ENCODE measurements at regions of chr19 and their contacts with region 1.

Region 1: DNA sequence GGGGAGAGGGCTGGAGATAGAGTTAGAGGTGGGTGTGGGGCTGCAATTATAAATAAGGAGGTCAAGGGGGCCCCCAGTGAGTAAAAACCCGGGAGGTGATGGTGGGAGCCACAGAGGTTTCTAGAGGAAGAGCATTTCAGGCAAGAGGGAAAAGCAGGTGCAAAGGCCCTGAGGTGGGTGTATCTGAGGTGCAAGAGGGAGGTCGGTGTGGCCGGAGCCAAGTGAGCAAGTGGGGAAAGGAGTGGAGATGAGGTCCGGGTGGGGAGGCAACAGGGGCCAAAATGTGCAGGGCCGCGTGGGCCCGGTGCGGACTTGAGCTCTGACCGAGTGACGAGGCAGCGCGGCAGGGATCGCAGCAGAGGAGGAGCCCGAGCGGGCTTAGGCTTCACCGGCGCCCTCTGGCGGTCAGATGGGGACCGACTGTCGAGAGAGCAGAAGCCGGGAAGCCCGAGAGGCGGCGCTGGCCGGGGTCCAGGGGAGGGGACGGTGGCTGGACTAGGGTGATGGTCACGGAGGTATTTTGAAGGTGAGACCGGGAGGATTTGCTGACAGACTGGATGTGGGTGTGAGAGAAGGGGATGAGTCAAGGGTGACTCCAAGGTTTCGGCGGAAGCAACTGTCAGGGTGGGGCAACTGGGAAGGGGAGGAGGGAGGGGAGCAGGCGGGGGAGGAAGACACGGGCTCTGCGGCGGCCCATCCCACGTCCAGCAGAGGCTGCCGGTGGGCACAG is 17.7 kb upstream of the SPACA4 start:
- DNase-seq: peak; percentile 92 to 98 (median 94)
- ATAC-seq: peak; percentile 91
- H3K4me3 ChIP-seq: no peak overlapping the region
- H3K4me1 ChIP-seq: peaks cover 14% of the 10 kb centered on the region
- CTCF ChIP-seq: peak; percentile 93

Region 2: GRCh38 chr19:48492925-48493717 is 95.7 kb before region 1 on chr19:
- intact Hi-C with region 1: loop called in 1 of 2 experiments (anchors 5 kb)
- DNase-seq: peak; percentile 96 to 98 (median 97)
- ATAC-seq: peak; percentile 86
- H3K4me3 ChIP-seq: peak overlapping the region; percentile 14
- H3K4me1 ChIP-seq: peaks cover 15% of the 10 kb centered on the region
- CTCF ChIP-seq: no peak